ENCODE measurements at regions of chr6 and their contacts with region 1.

Region 1: DNA sequence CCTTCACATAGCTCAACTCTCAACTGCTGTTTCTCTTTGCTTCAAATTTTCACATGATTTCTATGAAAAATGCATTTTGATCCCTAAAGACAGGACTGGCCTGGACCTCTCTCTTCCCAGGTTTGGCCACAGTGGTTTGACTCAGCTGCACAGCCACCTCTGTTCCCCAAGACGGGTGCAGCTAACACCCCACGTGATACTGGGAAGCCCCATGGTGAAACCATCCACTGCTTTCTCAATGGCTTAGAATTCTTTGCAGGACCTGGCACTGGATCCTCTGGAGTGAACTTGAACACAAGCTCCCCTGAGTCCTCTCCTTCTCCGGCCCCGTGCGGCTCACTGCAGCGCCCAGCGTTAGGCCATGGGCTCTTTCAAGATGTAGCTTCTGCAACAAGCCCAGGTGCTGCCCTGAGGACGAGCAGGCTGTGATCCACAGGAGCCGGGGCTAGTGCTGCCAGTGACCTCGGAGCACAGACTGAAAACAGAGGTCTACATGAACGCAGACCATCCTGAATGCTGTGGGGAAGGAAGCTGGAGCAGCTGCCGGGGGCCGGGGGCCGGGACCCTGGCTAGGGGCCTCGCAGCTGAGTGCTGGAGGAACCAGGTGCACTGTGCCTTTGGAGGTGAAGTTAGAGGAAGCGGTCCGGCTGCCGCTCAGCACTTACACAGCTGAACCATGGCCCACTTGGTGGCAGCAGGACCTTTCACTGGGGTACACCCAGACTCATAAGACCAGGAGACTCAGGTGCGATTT is 58.8 kb upstream of the MPC1 start:
- DNase-seq: no peak
- ATAC-seq: no peak
- H3K4me3 ChIP-seq: no peak overlapping the region
- H3K4me3 Mint-ChIP-seq: no peak overlapping the region
- H3K27ac ChIP-seq: no peak overlapping the region
- H3K27ac Mint-ChIP-seq: no peak overlapping the region
- H3K4me1 ChIP-seq: peaks cover 7% of the 10 kb centered on the region
- H3K4me1 Mint-ChIP-seq: peaks cover 18% of the 10 kb centered on the region
- H3K27me3 ChIP-seq: no peaks in the 10 kb centered on the region
- H3K27me3 Mint-ChIP-seq: peaks cover 4% of the 10 kb centered on the region
- CTCF ChIP-seq: no peak

Region 2: GRCh38 chr6:166456395-166457156 is 15.1 kb after region 1 on chr6:
- CTCF ChIA-PET with region 1: interaction called, 18 read pairs
- POLR2A ChIA-PET with region 1: no interaction called
- intact Hi-C with region 1: no loop called
- DNase-seq: peak in 4 of 9 experiments; percentile 22 to 44 (median 34)
- ATAC-seq: no peak
- H3K4me3 ChIP-seq: no peak overlapping the region
- H3K4me3 Mint-ChIP-seq: no peak overlapping the region
- H3K27ac ChIP-seq: no peak overlapping the region
- H3K27ac Mint-ChIP-seq: peak overlapping the region; percentile 39
- H3K4me1 ChIP-seq: no peaks in the 10 kb centered on the region
- H3K4me1 Mint-ChIP-seq: peaks cover 4% of the 10 kb centered on the region
- H3K27me3 ChIP-seq: no peaks in the 10 kb centered on the region
- H3K27me3 Mint-ChIP-seq: no peaks in the 10 kb centered on the region
- CTCF ChIP-seq: no peak